Right ventricle myocardium inferior (tissue), 1 donor: ENCODE measurements at regions of chr12 and their contacts with region 1.

Region 1: DNA sequence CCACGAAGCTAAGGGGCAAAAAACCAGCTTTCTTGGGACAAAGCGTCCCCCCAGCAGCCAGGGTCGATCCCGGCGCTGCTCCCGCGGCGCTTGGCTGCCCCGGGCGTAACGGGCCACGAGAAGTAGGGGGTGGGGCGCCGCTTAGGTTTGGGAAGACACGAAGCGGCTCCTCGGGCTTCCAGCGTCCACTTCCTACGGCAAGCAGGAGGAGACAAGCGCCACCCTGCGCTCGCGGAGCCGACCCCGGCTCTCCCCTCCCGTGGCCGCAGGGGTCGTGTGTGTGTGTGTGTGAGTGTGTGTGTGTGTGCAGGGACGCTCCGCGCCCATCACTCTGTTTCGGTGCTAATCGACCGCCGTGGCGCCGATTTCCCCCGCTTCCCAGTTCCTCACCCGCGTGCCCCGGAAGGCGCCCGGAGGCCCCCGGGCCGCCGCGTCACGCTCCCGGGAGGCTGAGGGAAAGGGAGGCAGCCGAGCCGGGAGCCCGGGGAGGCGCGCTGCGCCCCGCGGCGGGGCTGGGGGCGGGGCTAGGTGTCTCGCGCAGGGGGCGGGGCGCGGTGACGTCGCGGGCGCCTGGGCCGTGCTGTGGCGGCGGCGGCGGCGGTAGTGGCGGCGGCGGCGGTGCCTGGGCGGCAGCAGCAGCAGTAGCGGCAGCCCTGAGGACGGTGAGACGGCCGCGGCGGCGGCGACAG is at the start of gene ERC1:
- DNase-seq: peak; percentile 95
- ATAC-seq: peak; percentile 96
- total RNA-seq, gene ERC1: 43.1 TPM

Region 2: DNA sequence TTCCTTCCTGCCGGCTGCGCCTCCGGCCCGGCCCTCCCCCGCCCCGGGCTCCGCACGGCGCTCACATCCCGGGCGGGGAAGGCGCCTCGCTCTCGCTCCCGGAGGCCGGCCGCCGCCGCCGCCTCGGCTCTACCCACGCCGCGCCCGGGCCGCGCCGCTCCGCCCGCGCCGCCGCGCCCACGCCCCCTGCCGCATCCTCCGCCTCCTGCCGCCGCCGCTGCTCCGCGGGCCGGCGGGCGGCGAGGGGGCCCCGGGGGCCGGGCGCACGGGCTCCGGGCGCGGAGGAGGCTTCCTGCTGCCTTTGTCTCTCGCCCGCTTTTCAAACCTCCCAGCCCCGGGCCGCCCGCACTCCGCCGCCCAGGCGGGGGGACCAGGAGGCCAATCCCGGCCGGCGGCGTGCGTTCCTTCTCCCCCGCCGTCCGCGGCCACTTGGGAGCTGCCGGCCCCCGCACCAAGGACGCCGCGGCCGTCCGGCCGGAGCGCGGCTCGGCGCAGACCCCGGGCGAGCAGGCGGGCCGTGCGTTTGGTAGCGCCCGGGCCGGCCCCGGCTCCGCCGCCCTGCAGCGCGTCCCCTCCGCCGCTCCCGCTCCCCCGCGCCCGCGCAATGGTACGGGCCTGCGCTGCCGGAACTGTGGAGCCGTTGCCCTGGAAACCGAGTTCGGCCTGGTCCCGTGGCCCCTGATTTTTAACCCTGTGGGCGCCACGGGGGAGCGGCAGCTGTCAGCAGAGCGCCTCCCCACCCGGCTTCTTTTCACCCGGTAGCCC is 603.6 kb after region 1 on chr12 and contains the start of gene FBXL14:
- intact Hi-C with region 1: loop called (anchors 5 kb)
- DNase-seq: peak; percentile 96
- ATAC-seq: peak; percentile 82
- total RNA-seq, gene FBXL14: 6.2 TPM